Activated T-helper 1 cell treated with anti-CD3 and anti-CD28 coated beads, Interleukin-12 subunit alpha, Interleukin-12 subunit beta, Interleukin-2, Interleukin-4 antibody, amounts not matched to agents 30 ng/mL and 10 ng/mL and 1 ng/mL, durations not matched to agents 14 hours and 24 hours and 36 hours (primary cell): ENCODE measurements at regions of chr1 and their contacts with region 1.

Region 1: DNA sequence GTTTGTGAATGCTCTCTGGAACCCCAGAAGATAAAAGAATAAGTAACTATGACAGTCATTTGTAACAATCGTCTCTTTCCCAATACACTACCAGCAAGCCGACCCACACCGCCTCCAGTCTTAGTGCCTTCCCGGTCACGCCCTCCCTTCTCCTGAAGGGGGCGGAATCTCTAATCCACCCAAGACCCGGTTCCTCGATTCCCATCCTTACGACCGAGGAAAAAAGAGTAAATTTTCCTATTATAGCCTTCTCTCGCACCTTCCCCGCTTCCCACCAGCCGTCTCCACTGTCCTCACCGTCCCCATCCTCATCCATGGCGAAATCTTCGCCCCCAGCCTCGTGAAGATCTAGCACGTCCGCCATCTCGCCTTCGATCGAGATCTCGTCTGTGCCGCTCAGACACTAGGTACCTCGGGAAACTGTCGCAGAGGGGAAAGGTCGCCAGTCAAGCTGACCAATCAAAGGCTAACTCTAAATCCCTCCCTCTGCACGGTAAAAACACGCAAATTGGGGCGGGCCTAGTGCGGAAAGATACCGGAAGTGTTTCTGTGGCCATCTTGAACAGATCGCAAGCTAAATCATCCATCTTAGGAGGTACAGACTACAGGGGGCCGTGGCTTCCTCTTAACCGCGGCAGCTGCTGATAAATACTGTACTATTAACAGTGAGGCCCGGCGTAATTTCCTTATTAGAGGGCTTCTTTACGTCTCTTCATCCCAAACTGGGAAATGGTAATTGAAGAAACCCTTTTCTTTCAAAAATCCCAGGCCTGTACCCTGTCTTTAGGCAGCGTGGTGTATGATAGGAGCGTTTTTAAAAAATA is at the start of gene RBM8A:
- DNase-seq: peak; percentile 93
- H3K4me3 Mint-ChIP-seq: no peak within 1 kb of the TSS
- H3K27ac Mint-ChIP-seq: peak within 1 kb of the TSS; percentile 20
- H3K4me1 Mint-ChIP-seq: peaks cover 11% of the 10 kb centered on the region
- H3K27me3 Mint-ChIP-seq: no peaks in the 10 kb centered on the region
- total RNA-seq, gene RBM8A: 331 and 354 TPM in 2 replicates

Region 2: GRCh38 chr1:145804235-145805045 is 122.8 kb before region 1 on chr1:
- intact Hi-C with region 1: no loop called
- DNase-seq: no peak
- H3K4me3 Mint-ChIP-seq: no peak overlapping the region
- H3K27ac Mint-ChIP-seq: no peak overlapping the region
- H3K4me1 Mint-ChIP-seq: peaks cover 26% of the 10 kb centered on the region
- H3K27me3 Mint-ChIP-seq: no peaks in the 10 kb centered on the region

Region 3: DNA sequence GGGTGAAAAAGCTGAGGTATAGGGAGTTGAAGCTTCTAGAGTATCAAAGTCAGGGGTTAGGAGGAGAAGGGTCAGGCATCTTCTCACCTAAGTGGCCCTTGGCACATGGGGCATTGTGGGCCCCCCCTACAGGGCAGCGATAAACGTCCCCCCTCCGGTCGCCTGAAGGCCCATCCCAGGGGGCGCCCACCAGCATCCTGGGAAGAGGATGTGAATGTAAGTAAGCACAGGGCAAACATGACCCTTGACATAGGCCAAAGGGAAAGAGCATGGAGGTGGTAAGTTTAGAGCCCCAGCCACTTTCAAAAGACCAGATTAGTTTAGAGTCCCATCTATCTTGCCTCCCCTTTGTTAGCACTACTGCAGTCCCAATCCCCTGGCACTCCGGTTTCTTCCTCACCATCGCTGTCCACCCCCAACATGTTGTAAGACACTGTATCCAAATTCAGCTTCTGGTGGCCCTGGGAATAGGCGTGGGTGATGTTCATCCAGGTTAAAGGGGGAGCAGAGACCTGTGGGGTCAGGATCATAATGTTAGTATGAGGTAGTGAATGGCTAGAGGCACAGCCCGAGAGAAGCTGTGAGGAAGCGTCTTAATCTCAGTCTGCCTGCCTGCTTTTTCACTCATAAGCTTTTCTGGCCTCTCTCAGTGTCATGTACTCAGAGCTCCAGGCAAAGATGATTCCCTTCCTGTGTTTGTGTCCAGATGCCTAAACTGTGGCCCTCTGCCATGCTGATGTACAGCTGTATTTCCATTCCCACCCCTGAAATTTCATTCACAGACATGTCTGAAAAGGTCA is 20.1 kb before region 1 on chr1:
- intact Hi-C with region 1: loop called (anchors 2 kb)
- DNase-seq: no peak
- H3K4me3 Mint-ChIP-seq: no peak overlapping the region
- H3K27ac Mint-ChIP-seq: no peak overlapping the region
- H3K4me1 Mint-ChIP-seq: peaks cover 5% of the 10 kb centered on the region
- H3K27me3 Mint-ChIP-seq: no peaks in the 10 kb centered on the region

Region 4: DNA sequence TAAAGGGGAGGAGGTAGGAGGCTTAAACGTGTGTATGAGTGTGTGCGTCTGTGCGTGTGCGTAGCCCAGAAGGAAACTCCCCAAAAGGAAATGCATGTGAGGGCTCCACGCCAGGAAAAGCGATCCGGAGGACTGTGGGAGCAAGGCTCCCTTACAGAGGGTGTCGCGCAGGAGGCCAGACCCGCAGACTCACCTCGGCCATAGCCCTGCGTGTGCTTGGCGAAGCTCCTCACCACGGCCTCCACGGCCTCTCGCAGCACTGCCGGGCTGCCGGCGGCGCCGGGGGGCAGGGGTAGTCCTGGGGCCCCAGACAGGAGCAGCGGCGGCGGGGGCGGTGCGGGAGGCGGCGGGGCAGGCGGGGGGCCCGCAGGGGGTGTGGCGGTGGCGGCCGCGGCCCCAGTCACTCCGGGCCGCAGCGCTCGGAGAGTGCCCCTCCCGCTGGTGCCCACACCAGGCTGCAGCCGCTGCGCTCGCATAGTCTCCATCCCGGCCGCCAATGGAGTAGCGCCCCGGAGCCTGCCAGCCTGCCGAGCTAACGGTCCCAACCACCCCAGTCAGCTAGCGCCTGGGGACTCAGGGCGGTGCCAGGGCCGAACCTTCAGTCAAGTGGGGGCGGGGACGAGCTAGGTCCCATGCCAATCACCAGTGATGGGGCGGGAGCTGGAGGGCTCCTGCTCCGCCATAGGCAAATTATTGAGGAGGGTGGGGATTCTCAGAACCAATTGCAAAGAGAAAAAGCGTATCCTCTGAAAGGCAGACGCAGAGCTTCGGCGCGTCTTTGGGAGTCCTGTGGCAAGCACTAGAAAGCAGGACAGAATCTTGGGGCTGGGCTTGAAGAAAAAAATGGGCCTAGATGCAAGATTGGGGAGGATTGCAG is 30.4 kb after region 1 on chr1 and contains the start of gene LIX1L:
- intact Hi-C with region 1: loop called (anchors 1 kb)
- DNase-seq: peak; percentile 93
- H3K4me3 Mint-ChIP-seq: peak within 1 kb of the TSS; percentile 93
- H3K27ac Mint-ChIP-seq: peak within 1 kb of the TSS; percentile 93
- H3K4me1 Mint-ChIP-seq: peaks cover 68% of the 10 kb centered on the region
- H3K27me3 Mint-ChIP-seq: no peaks in the 10 kb centered on the region
- total RNA-seq, gene LIX1L: 30.3 and 32.2 TPM in 2 replicates